Gastrocnemius medialis (tissue), 4 donors: ENCODE measurements at regions of chr15 and their contacts with region 1.

Region 1: GRCh38 chr15:90869601-90870353 is 1.4 kb downstream of the FURIN start:
- DNase-seq: peak; percentile 56 to 66
- ATAC-seq: peak; percentile 22 to 42
- H3K4me3 ChIP-seq: peak overlapping the region in 1 of 4 donors; percentile 79
- H3K27ac ChIP-seq: peak overlapping the region; percentile 93 to 98 (median 96)
- H3K4me1 ChIP-seq: peaks cover 30 to 42% of the 10 kb centered on the region in 2 donors
- H3K27me3 ChIP-seq: no peaks in the 10 kb centered on the region
- CTCF ChIP-seq: no peak
- POLR2A ChIP-seq: peak; percentile 16 to 39

Region 2: DNA sequence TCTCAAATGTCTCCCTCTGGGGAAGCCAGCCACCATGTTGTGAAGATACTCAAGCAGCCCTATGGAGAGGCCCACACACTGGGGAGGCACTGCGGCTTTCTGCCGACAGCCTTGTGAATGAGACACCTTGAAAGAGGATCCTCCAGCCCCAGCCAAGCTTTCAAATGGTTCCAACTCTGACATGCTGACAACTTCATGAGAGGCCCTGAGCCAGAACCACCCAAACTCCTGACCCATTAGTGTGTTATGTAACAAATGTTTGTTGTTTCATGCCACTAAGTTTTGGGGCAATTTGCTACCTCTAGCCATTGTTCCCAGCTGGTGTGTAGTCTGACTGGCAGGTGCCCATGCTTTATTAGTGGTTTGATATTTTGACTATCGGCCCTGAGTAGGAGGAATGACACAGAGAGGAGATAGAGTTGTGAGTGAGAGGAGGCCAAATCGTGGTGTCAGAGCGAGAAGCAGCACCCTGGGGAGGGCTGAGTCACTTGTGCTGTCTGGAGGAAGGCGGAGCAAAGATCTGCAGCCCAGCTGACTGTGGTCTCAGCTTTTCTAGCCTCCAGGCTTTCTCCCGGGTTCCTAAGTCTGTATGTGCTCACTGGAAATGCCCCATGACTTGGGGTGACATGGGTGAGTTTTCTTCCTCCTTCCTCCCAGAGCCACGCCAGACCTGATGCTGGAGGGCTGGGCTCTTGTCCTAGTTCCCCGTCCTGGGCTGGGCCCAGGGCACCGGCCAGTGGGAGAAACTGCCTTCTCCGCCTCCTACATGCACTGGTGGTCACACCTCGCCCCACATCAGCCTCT is 209.4 kb before region 1 on chr15:
- in situ Hi-C with region 1: no loop called
- intact Hi-C with region 1: loop called (anchors 5 kb)
- DNase-seq: peak; percentile 89 to 91
- ATAC-seq: peak; percentile 84 to 85
- H3K4me3 ChIP-seq: peak overlapping the region; percentile 31 to 58 (median 55)
- H3K27ac ChIP-seq: peak overlapping the region; percentile 92 to 100 (median 98)
- H3K4me1 ChIP-seq: peaks cover 34 to 51% of the 10 kb centered on the region in 2 donors
- H3K27me3 ChIP-seq: no peaks in the 10 kb centered on the region
- CTCF ChIP-seq: no peak
- POLR2A ChIP-seq: peak; percentile 46 to 75

Region 3: DNA sequence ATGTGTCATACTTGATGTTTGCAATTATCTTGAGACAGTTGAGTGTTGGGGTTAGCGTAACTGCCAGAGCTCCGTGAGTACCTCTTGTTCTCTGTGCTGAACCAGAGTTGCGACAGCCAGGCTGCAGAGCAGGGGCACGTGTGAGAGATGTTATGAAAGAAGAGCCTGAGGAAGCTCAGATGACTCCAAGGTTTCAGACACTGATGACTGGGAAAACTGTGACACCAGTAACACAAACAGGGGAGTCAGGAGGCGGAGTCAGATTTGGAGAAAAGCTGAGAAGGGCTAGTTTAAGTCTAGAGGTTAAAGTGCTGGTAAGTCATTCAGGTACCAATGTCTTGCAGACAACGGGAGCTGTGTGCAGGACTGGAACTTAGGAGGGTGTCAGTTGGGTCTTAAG is 107.7 kb before region 1 on chr15:
- in situ Hi-C with region 1: no loop called
- intact Hi-C with region 1: loop called (anchors 2 kb)
- DNase-seq: peak; percentile 89 to 96
- ATAC-seq: peak; percentile 97 to 98
- H3K4me3 ChIP-seq: peak overlapping the region in 1 of 4 donors; percentile 22
- H3K27ac ChIP-seq: peak overlapping the region; percentile 76 to 90 (median 82)
- H3K4me1 ChIP-seq: peaks cover 0 to 24% of the 10 kb centered on the region in 2 donors
- H3K27me3 ChIP-seq: no peaks in the 10 kb centered on the region
- CTCF ChIP-seq: no peak
- POLR2A ChIP-seq: peak; percentile 52 to 77